Common myeloid progenitor, CD34-positive (primary cell): ENCODE measurements at regions of chr5 and their contacts with region 1.

Region 1: GRCh38 chr5:136037001-136037705 is 8.4 kb downstream of the TGFBI start:
- DNase-seq: peak; percentile 74 to 93 (median 88)
- H3K4me3 ChIP-seq: peak overlapping the region in 2 of 7 experiments; percentile 12 to 31
- H3K27ac ChIP-seq: no peak overlapping the region
- H3K4me1 ChIP-seq: peaks cover 2 to 49% (median 25%) of the 10 kb centered on the region in 4 experiments
- H3K27me3 ChIP-seq: peaks cover 0 to 13% (median 2%) of the 10 kb centered on the region in 5 experiments

Region 2: GRCh38 chr5:136159457-136159856 is 122.3 kb after region 1 on chr5:
- CTCF ChIA-PET with region 1: no interaction called
- POLR2A ChIA-PET with region 1: interaction called, 14 read pairs
- DNase-seq: no peak
- H3K4me3 ChIP-seq: no peak overlapping the region
- H3K27ac ChIP-seq: no peak overlapping the region
- H3K4me1 ChIP-seq: no peaks in the 10 kb centered on the region
- H3K27me3 ChIP-seq: no peaks in the 10 kb centered on the region